Dendritic cell treated with granulocyte-macrophage colony-stimulating factor and Interleukin-4, amounts not matched to agents 40 ng/mL and 50 ng/mL, for 4 days (primary cell): ENCODE measurements at regions of chr9 and their contacts with region 1.

Region 1: GRCh38 chr9:91681461-91682305 is 258.1 kb upstream of the NFIL3 start:
- H3K4me3 Mint-ChIP-seq: peak overlapping the region; percentile 74
- H3K27ac Mint-ChIP-seq: peak overlapping the region; percentile 90
- H3K4me1 Mint-ChIP-seq: peaks cover 17% of the 10 kb centered on the region
- H3K27me3 Mint-ChIP-seq: peaks cover 3% of the 10 kb centered on the region

Region 2: DNA sequence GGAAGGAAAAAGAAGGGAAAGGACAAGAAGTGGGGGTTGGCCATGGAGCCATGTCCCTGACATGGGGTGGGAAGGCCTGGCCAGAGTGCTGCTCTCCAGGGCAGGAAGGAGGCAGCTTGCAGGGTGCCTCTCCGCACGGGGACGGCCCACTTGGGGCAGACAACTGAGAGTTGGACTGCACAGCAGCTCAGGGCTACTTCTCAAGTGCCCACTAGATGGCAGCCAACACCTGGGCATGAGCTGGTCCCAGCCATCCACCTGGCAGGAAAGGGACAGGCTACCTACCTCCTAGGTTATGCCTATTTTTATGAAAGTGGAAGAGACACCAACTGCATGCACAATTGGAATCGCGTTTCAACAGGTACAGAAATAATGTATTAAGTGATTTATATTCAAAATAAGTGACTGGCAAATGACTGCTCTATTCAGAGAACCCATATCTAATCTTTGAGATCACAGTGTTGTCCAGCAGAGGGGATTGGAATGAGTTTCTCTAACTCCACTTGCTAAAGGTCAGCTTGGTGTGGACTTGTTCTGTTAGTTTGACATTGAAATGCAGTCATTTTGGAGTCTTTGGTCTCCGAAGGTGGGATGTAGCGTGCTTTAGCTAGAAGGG is 766.7 kb before region 1 on chr9:
- intact Hi-C with region 1: loop called (anchors 1 kb)
- H3K4me3 Mint-ChIP-seq: no peak overlapping the region
- H3K27ac Mint-ChIP-seq: no peak overlapping the region
- H3K4me1 Mint-ChIP-seq: peaks cover 11% of the 10 kb centered on the region
- H3K27me3 Mint-ChIP-seq: peaks cover 4% of the 10 kb centered on the region

Region 3: GRCh38 chr9:91433180-91433579 is 248.5 kb before region 1 on chr9:
- intact Hi-C with region 1: loop called (anchors 10 kb)
- H3K4me3 Mint-ChIP-seq: no peak overlapping the region
- H3K27ac Mint-ChIP-seq: no peak overlapping the region
- H3K4me1 Mint-ChIP-seq: peaks cover 8% of the 10 kb centered on the region
- H3K27me3 Mint-ChIP-seq: peaks cover 5% of the 10 kb centered on the region

Region 4: GRCh38 chr9:91714020-91714721 is 32.5 kb after region 1 on chr9:
- intact Hi-C with region 1: no loop called
- H3K4me3 Mint-ChIP-seq: peak overlapping the region; percentile 44
- H3K27ac Mint-ChIP-seq: no peak overlapping the region
- H3K4me1 Mint-ChIP-seq: peaks cover 6% of the 10 kb centered on the region
- H3K27me3 Mint-ChIP-seq: peaks cover 18% of the 10 kb centered on the region